Right lobe of liver (tissue), 6 donors: ENCODE measurements at regions of chr21 and their contacts with region 1.

Region 1: GRCh38 chr21:17679002-17679600 is 66.4 kb upstream of the BTG3 start:
- DNase-seq: no peak
- ATAC-seq: peak; percentile 98 to 100 (median 98)
- H3K4me3 ChIP-seq: no peak overlapping the region
- H3K27ac ChIP-seq: no peak overlapping the region
- H3K4me1 ChIP-seq: no peaks in the 10 kb centered on the region
- H3K27me3 ChIP-seq: no peaks in the 10 kb centered on the region
- CTCF ChIP-seq: peak; percentile 75 to 95 (median 80)
- POLR2A ChIP-seq: no peak

Region 2: DNA sequence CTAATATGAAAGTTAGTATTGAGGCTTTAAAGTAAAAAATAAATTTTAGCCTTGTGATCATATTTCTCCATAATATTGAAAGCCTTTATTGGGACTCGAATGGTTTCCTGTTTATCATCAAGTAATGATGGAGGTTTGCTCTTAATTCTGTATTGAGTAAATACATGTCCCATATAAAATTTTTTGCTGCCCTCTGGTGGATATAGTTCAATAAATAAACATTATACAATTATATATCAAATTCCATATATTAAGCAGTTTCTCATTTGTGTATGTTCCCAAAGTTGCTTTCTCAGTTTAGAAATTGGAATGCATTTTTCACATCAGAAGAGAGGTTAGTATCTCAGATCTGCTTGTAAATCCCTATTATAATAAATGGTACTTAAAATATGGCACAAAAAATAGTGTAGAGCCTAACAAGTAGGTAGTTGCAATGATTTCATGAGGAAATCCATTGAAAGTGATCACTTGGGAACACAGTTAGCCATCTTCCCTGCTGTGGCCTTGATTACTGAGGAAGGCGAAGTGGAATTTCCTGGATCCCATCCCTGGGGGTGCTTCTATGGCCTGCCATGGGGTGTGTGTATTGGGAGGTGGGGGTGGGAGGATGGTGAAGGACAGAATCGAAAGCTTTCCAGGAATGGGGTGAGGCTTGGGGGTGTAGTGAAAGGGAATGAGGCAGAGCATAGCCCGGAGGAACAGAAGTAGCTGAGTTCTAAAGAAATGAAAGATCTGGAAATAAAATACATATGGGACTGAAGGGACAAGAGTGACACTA is 224.1 kb after region 1 on chr21:
- intact Hi-C with region 1: loop called in 1 of 2 experiments (anchors 10 kb)
- DNase-seq: no peak
- ATAC-seq: peak; percentile 38 to 57 (median 51)
- H3K4me3 ChIP-seq: no peak overlapping the region
- H3K27ac ChIP-seq: no peak overlapping the region
- H3K4me1 ChIP-seq: no peaks in the 10 kb centered on the region
- H3K27me3 ChIP-seq: no peaks in the 10 kb centered on the region
- CTCF ChIP-seq: peak; percentile 26 to 40 (median 32)
- POLR2A ChIP-seq: no peak